ENCODE measurements at regions of chrX and their contacts with region 1.

Region 1: GRCh38 chrX:57821703-57822375 is 88.4 kb downstream of the ZXDA start:
- DNase-seq: peak in 1 of 2 donors; percentile 7
- ATAC-seq: peak; percentile 75

Region 2: GRCh38 chrX:57929373-57929772 is 107.5 kb after region 1 on chrX:
- intact Hi-C with region 1: loop called in 1 of 2 experiments (anchors 5 kb)
- DNase-seq: no peak
- ATAC-seq: no peak

Region 3: GRCh38 chrX:58025979-58026378 is 204.1 kb after region 1 on chrX:
- intact Hi-C with region 1: loop called in 1 of 2 experiments (anchors 10 kb)
- DNase-seq: peak in 1 of 2 donors; percentile 37
- ATAC-seq: no peak